GM10248 (cell line): ENCODE measurements at regions of chr10 and their contacts with region 1.

Region 1: GRCh38 chr10:11515596-11516430 is 95.6 kb downstream of the USP6NL start:
- DNase-seq: peak; percentile 45
- CTCF ChIP-seq: peak; percentile 80

Region 2: DNA sequence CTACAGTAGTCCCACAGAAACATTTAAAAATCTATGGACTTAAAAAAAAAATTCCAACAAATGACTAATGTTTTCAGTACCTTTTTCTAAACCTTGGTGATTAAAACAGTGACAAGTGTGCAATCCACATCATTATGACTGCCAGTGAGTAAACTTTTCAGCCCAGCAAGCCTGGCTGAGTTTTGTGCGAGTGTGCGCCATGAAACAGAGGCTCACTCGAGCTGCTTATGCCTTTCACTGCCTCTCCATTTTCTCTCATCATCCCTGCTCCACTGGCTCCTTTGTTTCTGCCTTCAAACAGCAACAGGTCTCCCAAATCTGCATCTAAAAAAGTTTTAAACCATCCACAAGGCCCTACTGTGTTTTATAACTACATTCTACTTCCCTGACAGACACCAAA is 10.2 kb before region 1 on chr10:
- CTCF ChIA-PET with region 1: interaction called, 22 read pairs
- POLR2A ChIA-PET with region 1: no interaction called
- DNase-seq: no peak
- CTCF ChIP-seq: no peak

Region 3: GRCh38 chr10:11724938-11725776 is 209.3 kb after region 1 on chr10:
- CTCF ChIA-PET with region 1: interaction called, 45 read pairs
- POLR2A ChIA-PET with region 1: no interaction called
- DNase-seq: peak; percentile 83
- CTCF ChIP-seq: peak; percentile 65